CD8-positive, alpha-beta T cell (primary cell): ENCODE measurements at regions of chr12 and their contacts with region 1.

Region 1: DNA sequence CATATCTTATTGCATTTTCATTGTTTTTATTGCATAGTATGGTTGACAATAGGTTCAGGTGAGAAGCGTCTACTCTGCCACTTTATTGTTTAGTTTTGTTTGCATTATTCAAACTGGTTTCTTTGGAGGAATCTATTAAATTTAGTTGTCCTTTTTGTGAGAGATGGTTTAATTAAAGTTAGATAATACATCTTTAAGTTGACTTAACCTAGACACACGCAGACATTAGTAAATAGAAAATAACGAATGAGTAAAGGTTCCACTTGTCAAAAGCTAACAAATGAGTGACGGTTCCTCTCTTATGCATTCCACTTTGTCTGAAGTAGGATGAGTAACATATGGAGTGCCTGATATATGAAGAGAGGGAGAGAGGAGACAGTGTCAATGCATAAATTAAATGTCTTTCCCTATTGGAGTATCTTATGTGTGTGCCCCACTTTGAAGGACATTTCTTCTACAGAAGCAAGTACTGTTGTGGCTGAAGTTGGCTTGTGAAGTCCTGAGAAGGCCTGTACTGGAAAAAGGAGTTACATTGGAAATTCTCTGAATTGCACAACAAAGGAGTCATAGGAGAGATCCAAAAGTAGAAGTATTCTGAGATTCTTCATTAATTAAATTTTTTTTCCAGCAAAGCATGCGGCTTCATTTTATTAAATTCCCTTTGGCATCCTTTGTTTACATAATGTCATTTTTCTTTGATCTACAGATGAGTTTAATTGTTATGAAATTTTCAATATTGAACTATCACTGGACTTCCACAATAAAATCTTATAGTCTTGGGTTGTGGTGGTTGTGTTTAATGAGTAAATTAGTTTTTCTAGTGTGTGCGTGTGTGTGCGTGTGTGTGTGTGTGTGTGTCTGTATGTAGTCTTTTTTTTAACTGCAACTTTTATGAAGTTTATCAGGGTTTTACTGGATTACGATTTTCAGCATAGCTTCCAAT is 74.4 kb downstream of the ARID2 start:
- DNase-seq: no peak
- ATAC-seq: no peak
- H3K4me3 ChIP-seq: no peak overlapping the region
- H3K4me3 Mint-ChIP-seq: no peak overlapping the region
- H3K27ac ChIP-seq: no peak overlapping the region
- H3K27ac Mint-ChIP-seq: peak overlapping the region; percentile 24
- H3K4me1 ChIP-seq: no peaks in the 10 kb centered on the region
- H3K4me1 Mint-ChIP-seq: peaks cover 59% of the 10 kb centered on the region
- H3K27me3 ChIP-seq: no peaks in the 10 kb centered on the region
- H3K27me3 Mint-ChIP-seq: no peaks in the 10 kb centered on the region
- CTCF ChIP-seq: no peak

Region 2: DNA sequence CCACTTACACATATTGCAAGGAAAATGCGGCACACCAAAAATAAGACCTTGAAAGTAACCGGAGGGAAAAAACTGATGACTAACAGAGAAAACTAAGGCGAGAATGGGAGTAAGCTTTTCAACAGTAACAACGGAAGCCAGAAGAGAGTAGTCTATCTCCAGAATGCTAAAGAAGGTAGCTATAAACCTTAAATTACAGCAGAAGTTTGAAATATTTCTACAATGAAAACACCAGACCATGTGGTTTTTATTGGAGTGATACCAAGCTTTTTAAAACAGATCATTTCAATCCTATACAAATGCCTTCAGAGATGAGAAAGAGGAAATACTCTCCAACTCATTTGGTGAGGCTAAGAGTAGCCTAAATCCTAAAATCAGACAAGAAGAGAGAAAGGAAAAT is 378.5 kb before region 1 on chr12:
- CTCF ChIA-PET with region 1: no interaction called
- POLR2A ChIA-PET with region 1: no interaction called
- intact Hi-C with region 1: no loop called
- DNase-seq: no peak
- ATAC-seq: no peak
- H3K4me3 ChIP-seq: no peak overlapping the region
- H3K4me3 Mint-ChIP-seq: no peak overlapping the region
- H3K27ac ChIP-seq: no peak overlapping the region
- H3K27ac Mint-ChIP-seq: no peak overlapping the region
- H3K4me1 ChIP-seq: no peaks in the 10 kb centered on the region
- H3K4me1 Mint-ChIP-seq: no peaks in the 10 kb centered on the region
- H3K27me3 ChIP-seq: no peaks in the 10 kb centered on the region
- H3K27me3 Mint-ChIP-seq: no peaks in the 10 kb centered on the region
- CTCF ChIP-seq: no peak

Region 3: DNA sequence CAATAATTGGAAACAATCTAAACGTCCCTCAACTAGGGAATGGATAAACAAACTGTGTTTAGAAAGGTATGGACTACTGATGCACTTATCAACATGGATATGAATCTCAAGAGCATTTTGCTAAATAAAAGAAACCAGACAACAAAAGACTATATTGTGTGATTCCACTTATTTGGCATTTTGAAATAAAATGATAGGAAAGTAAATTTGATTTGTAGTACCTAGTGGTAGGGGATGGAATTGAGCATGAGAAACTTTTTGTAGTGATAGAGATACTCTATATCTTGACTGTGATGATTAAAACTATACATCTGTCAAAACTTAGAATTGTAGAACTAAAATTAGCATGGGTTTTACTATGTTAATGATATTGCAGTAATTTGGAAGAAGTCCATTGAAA is 12.7 kb after region 1 on chr12:
- CTCF ChIA-PET with region 1: no interaction called
- POLR2A ChIA-PET with region 1: interaction called, 3 read pairs
- intact Hi-C with region 1: loop called in 1 of 2 experiments (anchors 2 kb)
- DNase-seq: no peak
- ATAC-seq: no peak
- H3K4me3 ChIP-seq: no peak overlapping the region
- H3K4me3 Mint-ChIP-seq: no peak overlapping the region
- H3K27ac ChIP-seq: no peak overlapping the region
- H3K27ac Mint-ChIP-seq: no peak overlapping the region
- H3K4me1 ChIP-seq: no peaks in the 10 kb centered on the region
- H3K4me1 Mint-ChIP-seq: peaks cover 2% of the 10 kb centered on the region
- H3K27me3 ChIP-seq: no peaks in the 10 kb centered on the region
- H3K27me3 Mint-ChIP-seq: no peaks in the 10 kb centered on the region
- CTCF ChIP-seq: no peak